CD14-positive monocyte (primary cell): ENCODE measurements at regions of chrX and their contacts with region 1.

Region 1: GRCh38 chrX:1205680-1206611 is 6.5 kb downstream of the CRLF2 start:
- DNase-seq: peak; percentile 64 to 77 (median 71)
- H3K4me3 ChIP-seq: peak overlapping the region; percentile 32 to 69 (median 43)
- H3K4me3 Mint-ChIP-seq: peak overlapping the region; percentile 69 to 77
- H3K27ac ChIP-seq: no peak overlapping the region
- H3K27ac Mint-ChIP-seq: peak overlapping the region in 5 of 7 donors; percentile 44 to 66 (median 46)
- H3K4me1 ChIP-seq: peaks cover 27 to 29% of the 10 kb centered on the region in 2 donors
- H3K4me1 Mint-ChIP-seq: peaks cover 34% of the 10 kb centered on the region
- H3K27me3 ChIP-seq: no peaks in the 10 kb centered on the region
- H3K27me3 Mint-ChIP-seq: peaks cover 6 to 10% (median 7%) of the 10 kb centered on the region in 3 donors
- CTCF ChIP-seq: no peak

Region 2: DNA sequence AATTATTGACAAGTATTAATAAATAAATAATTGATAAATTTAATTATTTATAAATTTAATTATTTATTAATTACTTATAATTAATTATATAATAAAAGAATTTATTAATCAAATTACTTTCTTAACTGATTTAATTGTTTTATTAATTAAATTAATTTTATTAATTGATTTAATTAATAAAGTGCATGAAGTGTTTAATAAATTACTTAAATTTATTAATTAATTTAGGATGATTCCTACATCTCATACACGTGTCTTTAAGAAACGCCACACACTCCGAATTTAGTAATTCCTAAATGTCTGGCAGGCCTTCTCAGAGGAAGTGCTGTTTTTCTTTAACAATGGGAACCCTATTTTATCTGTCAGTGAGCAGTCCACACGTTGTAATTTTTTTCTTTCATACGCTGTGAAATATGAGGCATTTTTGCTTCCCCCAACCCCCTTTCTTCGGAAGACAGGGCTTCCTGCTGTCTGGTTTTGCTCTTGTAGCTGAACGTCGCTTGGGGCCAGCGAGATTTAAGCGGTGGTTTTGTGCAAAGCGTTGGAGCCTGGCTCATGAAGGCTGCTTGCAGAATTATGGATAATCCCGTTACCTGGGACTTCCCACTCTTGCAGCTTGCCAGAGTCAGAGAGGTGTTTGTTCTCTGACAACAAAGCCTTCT is 40.3 kb before region 1 on chrX:
- intact Hi-C with region 1: loop called in 1 of 2 experiments (anchors 5 kb)
- DNase-seq: peak; percentile 32 to 92 (median 41)
- H3K4me3 ChIP-seq: no peak overlapping the region
- H3K4me3 Mint-ChIP-seq: peak overlapping the region in 1 of 2 donors; percentile 72
- H3K27ac ChIP-seq: no peak overlapping the region
- H3K27ac Mint-ChIP-seq: peak overlapping the region in 3 of 7 donors; percentile 14 to 79 (median 76)
- H3K4me1 ChIP-seq: peaks cover 4 to 5% of the 10 kb centered on the region in 2 donors
- H3K4me1 Mint-ChIP-seq: peaks cover 14% of the 10 kb centered on the region
- H3K27me3 ChIP-seq: no peaks in the 10 kb centered on the region
- H3K27me3 Mint-ChIP-seq: peaks cover 4 to 14% (median 10%) of the 10 kb centered on the region in 3 donors
- CTCF ChIP-seq: no peak

Region 3: DNA sequence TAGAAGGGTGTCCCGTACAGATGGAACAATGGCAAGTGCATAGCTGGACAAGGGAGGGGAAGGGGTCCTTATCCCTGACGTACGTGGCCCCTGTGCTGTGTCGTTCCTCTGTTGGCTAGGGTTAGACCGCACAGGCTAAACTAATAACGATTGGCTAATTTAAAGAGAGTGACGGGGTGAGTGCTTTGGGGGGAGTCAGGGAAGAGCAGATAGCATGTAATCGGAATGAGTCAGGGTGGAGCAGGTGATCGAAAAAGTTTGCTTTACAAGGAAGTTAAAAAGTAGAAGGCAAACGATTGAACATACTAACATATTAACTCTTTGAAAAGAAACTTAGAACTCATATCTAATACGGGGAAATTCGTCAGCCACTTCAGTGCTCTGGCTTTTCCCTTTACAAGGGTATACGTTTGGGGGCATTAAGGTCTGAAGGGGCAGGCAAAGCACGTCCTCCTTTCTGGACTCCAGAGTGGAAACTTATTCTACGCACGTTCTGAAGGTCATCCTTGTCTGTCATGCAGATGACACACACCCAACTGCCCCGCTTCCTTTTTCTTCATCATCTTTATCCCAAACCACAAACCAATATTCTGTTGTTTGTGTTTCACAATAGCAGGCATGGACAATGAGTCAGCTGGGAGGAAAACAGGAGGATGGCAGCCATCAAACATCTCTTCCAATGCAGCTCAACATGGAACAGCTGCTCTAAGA is 16.7 kb after region 1 on chrX:
- intact Hi-C with region 1: loop called in 1 of 2 experiments (anchors 1 kb)
- DNase-seq: peak; percentile 89 to 97 (median 91)
- H3K4me3 ChIP-seq: no peak overlapping the region
- H3K4me3 Mint-ChIP-seq: peak overlapping the region; percentile 38 to 57
- H3K27ac ChIP-seq: peak overlapping the region in 1 of 2 donors; percentile 76
- H3K27ac Mint-ChIP-seq: peak overlapping the region in 5 of 7 donors; percentile 85 to 96 (median 95)
- H3K4me1 ChIP-seq: peaks cover 17 to 23% of the 10 kb centered on the region in 2 donors
- H3K4me1 Mint-ChIP-seq: peaks cover 6% of the 10 kb centered on the region
- H3K27me3 ChIP-seq: peaks cover 0 to 4% of the 10 kb centered on the region in 2 donors
- H3K27me3 Mint-ChIP-seq: peaks cover 7 to 20% (median 8%) of the 10 kb centered on the region in 3 donors
- CTCF ChIP-seq: no peak

Region 4: GRCh38 chrX:1239681-1240142 is 33.8 kb after region 1 on chrX:
- intact Hi-C with region 1: loop called in 1 of 2 experiments (anchors 2 kb)
- DNase-seq: peak; percentile 99 to 100 (median 99)
- H3K4me3 ChIP-seq: peak overlapping the region in 1 of 3 experiments; percentile 2
- H3K4me3 Mint-ChIP-seq: peak overlapping the region; percentile 42 to 54
- H3K27ac ChIP-seq: peak overlapping the region; percentile 59 to 74
- H3K27ac Mint-ChIP-seq: peak overlapping the region; percentile 81 to 96 (median 94)
- H3K4me1 ChIP-seq: peaks cover 22 to 25% of the 10 kb centered on the region in 2 donors
- H3K4me1 Mint-ChIP-seq: peaks cover 23% of the 10 kb centered on the region
- H3K27me3 ChIP-seq: peaks cover 0 to 2% of the 10 kb centered on the region in 2 donors
- H3K27me3 Mint-ChIP-seq: peaks cover 3 to 19% (median 10%) of the 10 kb centered on the region in 3 donors
- CTCF ChIP-seq: no peak

Region 5: GRCh38 chrX:1261285-1261684 is 55.3 kb after region 1 on chrX:
- intact Hi-C with region 1: no loop called
- DNase-seq: no peak
- H3K4me3 ChIP-seq: no peak overlapping the region
- H3K4me3 Mint-ChIP-seq: no peak overlapping the region
- H3K27ac ChIP-seq: no peak overlapping the region
- H3K27ac Mint-ChIP-seq: no peak overlapping the region
- H3K4me1 ChIP-seq: no peaks in the 10 kb centered on the region
- H3K4me1 Mint-ChIP-seq: peaks cover 11% of the 10 kb centered on the region
- H3K27me3 ChIP-seq: no peaks in the 10 kb centered on the region
- H3K27me3 Mint-ChIP-seq: peaks cover 1 to 10% (median 3%) of the 10 kb centered on the region in 3 donors
- CTCF ChIP-seq: no peak